CD8-positive, alpha-beta T cell (primary cell): ENCODE measurements at regions of chrX and their contacts with region 1.

Region 1: GRCh38 chrX:51860679-51861078 is 32.7 kb upstream of the MAGED1 start:
- DNase-seq: peak in 2 of 9 experiments; percentile 22 to 40
- ATAC-seq: no peak
- H3K4me3 ChIP-seq: no peak overlapping the region
- H3K4me3 Mint-ChIP-seq: no peak overlapping the region
- H3K27ac ChIP-seq: no peak overlapping the region
- H3K27ac Mint-ChIP-seq: no peak overlapping the region
- H3K4me1 ChIP-seq: no peaks in the 10 kb centered on the region
- H3K4me1 Mint-ChIP-seq: peaks cover 19% of the 10 kb centered on the region
- H3K27me3 ChIP-seq: no peaks in the 10 kb centered on the region
- H3K27me3 Mint-ChIP-seq: no peaks in the 10 kb centered on the region
- CTCF ChIP-seq: peak; percentile 25

Region 2: DNA sequence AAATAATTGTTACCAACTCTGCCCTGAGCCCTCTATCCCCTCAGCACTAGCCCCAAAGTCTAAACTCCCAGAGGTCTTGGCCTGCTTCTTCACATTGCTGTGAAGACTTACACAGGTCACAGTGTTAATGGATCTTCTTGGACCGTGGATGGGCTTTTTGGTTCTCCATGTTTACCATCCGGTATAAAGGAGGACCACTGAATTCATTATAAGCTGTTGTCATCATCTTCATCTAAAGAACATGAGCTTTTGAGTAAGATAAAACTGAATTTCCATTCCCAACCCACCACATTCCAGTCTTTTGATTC is 372.8 kb before region 1 on chrX:
- CTCF ChIA-PET with region 1: no interaction called
- POLR2A ChIA-PET with region 1: no interaction called
- intact Hi-C with region 1: loop called (anchors 5 to 10 kb)
- DNase-seq: no peak
- ATAC-seq: no peak
- H3K4me3 ChIP-seq: no peak overlapping the region
- H3K4me3 Mint-ChIP-seq: no peak overlapping the region
- H3K27ac ChIP-seq: no peak overlapping the region
- H3K27ac Mint-ChIP-seq: no peak overlapping the region
- H3K4me1 ChIP-seq: no peaks in the 10 kb centered on the region
- H3K4me1 Mint-ChIP-seq: no peaks in the 10 kb centered on the region
- H3K27me3 ChIP-seq: no peaks in the 10 kb centered on the region
- H3K27me3 Mint-ChIP-seq: peaks cover 3% of the 10 kb centered on the region
- CTCF ChIP-seq: no peak

Region 3: DNA sequence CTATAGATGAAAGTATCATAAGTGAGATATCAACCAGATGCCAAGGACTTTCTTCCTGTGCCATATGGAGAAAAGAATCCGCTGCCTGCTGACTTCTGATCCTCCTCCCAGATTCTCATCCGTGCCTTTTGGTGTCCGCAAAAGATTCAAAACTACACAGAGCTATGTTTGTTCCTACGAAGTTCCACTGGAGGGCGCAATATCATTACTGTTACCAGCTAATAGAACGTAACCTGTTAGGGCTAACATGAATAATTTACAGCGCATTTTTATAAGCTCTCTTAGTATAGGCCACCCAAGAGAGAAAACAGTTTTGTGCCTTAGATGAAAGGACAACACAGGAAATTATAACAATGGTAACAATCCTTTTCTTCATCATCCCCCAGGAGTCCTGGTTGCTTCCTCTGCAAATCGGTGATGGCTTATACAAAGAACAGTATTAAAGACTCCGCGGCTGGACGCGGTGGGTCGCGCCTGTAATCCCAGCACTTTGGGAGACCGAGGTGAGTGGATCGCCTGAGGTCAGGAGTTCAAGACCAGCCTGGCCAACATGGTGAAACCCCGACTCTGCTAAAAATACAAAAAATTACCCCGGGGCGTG is 219.2 kb before region 1 on chrX:
- CTCF ChIA-PET with region 1: interaction called, 3 read pairs
- POLR2A ChIA-PET with region 1: no interaction called
- intact Hi-C with region 1: loop called in 1 of 2 experiments (anchors 2 kb)
- DNase-seq: peak in 2 of 9 experiments; percentile 22 to 48
- ATAC-seq: no peak
- H3K4me3 ChIP-seq: no peak overlapping the region
- H3K4me3 Mint-ChIP-seq: no peak overlapping the region
- H3K27ac ChIP-seq: no peak overlapping the region
- H3K27ac Mint-ChIP-seq: no peak overlapping the region
- H3K4me1 ChIP-seq: no peaks in the 10 kb centered on the region
- H3K4me1 Mint-ChIP-seq: no peaks in the 10 kb centered on the region
- H3K27me3 ChIP-seq: no peaks in the 10 kb centered on the region
- H3K27me3 Mint-ChIP-seq: peaks cover 25% of the 10 kb centered on the region
- CTCF ChIP-seq: peak; percentile 27